Left cardiac atrium (tissue), 4 donors: ENCODE measurements at regions of chr11 and their contacts with region 1.

Region 1: GRCh38 chr11:69296890-69297786 is 3.2 kb downstream of the MYEOV start:
- DNase-seq: peak; percentile 95
- ATAC-seq: peak; percentile 78 to 81

Region 2: DNA sequence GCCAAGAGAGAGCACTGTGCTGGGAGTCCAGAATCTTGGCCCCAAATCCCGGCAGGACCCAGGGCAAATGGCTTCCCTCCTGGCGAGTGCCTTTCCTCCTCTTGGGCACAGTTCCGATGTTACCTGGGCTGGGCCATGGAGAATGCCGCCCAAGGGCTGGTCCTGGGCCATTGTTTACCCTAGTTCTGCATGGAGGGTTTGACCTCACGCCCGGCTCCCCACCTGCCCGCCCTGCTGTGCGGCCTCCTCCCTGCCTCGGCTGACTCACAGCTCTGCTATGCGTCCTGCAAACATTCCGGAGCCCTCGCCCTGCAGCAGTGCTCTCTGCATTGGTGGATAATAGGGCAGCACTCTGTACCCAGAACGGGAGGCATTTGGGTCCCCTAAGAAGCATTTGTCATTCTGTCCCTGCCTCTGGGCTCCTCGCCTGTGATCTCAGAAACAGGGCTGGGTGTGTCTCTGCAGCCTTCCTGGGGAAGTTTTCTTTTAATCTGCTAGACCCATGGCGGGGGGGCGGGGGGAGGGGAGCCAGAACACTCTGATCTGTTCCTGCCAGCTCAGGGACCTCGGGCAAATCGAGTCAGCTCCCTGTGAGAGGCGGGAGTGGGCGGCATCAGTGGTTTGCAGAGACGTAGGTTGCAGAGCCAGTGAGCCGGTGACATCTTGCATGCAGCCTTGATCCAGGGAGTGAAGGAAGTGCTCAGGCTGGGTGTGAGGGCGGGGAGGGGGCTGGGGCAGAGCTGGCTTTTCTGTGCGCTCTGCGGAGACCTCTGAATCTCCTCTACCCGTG is 174.3 kb before region 1 on chr11:
- intact Hi-C with region 1: loop called in 1 of 2 experiments (anchors 2 kb)
- DNase-seq: peak; percentile 74
- ATAC-seq: peak; percentile 69 to 91

Region 3: DNA sequence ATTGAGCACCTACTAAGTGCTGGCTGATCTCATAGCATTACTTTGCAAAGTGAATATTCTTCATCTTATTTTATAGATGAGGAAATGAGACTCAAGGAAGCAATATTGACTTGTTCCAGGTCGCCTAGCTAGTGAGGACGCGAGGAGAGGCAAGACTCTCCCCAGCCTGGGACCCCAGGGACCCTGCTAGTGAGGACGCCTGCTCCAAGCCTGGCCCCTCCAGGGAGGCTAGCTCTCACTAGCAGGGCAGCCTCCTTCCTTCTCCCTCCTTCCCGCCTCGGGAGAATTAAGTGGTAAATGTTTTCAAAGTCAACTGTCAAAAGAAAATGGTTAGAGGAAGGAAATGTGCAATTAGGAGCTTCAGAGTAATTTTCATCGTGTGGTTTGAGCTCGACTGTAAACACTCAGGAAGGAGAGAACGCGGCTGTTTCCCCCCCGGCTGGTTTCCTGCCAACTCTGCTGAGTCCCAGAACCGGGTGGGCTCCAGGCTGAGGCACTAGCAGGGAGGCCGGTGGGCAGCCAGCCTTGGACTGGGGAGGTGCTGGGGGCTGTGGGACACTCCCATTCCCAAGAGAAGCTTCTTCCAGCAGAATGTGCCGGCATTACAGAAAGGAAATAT is 14.7 kb after region 1 on chr11:
- intact Hi-C with region 1: no loop called
- DNase-seq: no peak
- ATAC-seq: peak in 1 of 2 donors; percentile 8

Region 4: DNA sequence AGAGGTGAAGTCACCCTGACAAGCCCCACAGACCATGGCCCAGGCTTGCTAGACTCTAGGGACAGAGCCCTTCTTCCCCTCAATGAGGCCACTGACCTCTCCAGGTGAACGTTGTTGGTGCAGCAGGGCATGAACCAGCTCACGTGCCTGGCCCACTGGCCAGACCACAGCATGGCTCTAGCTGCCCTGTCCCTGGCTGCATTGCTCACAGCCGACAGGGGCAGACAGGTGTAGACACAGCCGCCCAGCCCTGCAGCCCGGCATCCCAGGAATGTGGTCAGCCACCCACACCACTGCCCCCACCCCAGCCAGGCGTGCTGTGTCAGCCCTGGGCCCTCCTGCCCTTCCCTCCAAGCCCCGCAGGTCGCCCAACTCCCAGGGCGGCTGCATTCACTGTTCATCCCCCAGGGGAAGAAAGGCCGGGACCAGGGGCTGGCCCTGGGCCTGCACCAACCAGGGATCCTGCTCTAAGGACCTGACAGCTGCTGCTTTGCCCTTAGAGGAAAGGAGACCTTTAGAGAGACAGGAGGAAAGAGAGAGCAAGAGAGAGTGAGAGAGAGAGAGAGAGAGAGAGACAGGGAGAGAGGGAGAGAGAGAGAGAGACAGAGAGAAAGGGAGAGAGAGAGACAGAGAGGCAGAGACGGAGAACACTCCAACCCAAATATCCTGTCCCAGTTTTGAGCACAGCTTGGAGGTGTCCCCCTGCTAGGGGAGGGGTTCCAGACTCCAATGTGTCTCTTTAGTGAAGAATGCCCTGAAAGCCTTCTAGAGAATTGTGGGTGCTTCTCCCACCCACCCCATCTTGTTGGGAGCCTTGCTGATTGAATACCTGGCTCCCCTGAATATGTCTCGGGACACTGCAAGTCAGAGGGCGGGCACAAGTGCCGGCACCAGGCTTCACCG is 140.1 kb after region 1 on chr11:
- intact Hi-C with region 1: loop called (anchors 2 to 10 kb)
- DNase-seq: no peak
- ATAC-seq: peak in 1 of 2 donors; percentile 25

Region 5: GRCh38 chr11:69443138-69443967 is 146.2 kb after region 1 on chr11:
- intact Hi-C with region 1: loop called (anchors 2 to 10 kb)
- DNase-seq: peak; percentile 95
- ATAC-seq: peak; percentile 91 to 94

Region 6: GRCh38 chr11:69539416-69540117 is 242.4 kb after region 1 on chr11:
- intact Hi-C with region 1: loop called in 1 of 2 experiments (anchors 10 kb)
- DNase-seq: peak; percentile 33
- ATAC-seq: peak; percentile 57 to 64

Region 7: DNA sequence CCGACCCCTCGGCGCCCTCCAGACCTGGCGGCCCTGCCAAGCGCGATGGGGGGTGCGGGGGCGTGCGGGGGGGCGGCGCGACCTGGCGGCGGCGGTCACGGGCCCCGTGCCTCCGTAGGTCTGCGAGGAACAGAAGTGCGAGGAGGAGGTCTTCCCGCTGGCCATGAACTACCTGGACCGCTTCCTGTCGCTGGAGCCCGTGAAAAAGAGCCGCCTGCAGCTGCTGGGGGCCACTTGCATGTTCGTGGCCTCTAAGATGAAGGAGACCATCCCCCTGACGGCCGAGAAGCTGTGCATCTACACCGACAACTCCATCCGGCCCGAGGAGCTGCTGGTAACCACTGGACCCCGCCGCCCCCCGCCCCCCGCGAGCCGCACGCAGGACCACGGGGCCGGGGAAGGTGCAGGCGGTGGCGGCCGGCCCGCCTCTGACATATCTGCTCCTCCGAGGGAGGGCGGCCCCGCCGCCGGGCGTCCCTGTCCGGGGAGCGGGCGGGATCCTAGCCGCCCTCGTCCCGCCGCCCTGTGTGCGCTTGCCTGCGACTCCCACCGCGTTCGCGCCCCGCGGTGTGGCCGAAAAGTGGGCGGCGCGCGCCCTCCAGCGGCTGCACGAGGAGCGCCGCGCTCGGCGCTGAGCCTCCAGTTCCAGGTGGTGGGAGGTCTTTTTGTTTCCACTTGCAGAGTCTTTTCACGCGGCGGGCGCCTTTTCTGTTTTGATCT is 345.9 kb after region 1 on chr11:
- intact Hi-C with region 1: loop called (anchors 5 kb)
- DNase-seq: peak; percentile 83
- ATAC-seq: peak; percentile 69 to 74